ENCODE measurements at regions of chr2 and their contacts with region 1.

Region 1: GRCh38 chr2:177474998-177475397 is 82.4 kb downstream of the AGPS start:
- DNase-seq: no peak
- H3K4me3 ChIP-seq: no peak overlapping the region
- CTCF ChIP-seq: no peak
- POLR2A ChIP-seq: no peak

Region 2: GRCh38 chr2:175597286-175597685 is 1877.7 kb before region 1 on chr2:
- intact Hi-C with region 1: no loop called
- DNase-seq: no peak
- H3K4me3 ChIP-seq: no peak overlapping the region
- CTCF ChIP-seq: no peak
- POLR2A ChIP-seq: no peak

Region 3: DNA sequence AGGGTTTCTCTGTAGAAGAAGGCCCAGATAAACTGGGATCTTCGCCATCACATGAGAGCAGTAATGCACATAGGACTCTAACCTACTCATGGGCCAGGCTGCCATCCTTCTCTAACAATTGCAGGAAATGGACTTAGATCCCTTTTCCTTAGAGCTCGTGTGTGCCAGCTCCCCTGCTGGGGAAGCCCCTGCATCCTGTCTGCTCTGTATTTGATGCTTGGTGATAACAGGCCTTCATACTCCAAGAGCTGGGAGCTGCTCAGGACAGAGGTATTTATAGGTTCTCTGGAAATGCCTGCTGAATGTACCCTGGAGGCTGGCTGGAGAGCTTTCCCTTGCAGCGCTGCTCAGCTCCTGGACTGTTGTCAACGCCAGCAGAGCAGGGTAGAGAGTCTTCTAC is 956.2 kb before region 1 on chr2:
- intact Hi-C with region 1: no loop called
- DNase-seq: no peak
- H3K4me3 ChIP-seq: no peak overlapping the region
- CTCF ChIP-seq: no peak
- POLR2A ChIP-seq: no peak

Region 4: DNA sequence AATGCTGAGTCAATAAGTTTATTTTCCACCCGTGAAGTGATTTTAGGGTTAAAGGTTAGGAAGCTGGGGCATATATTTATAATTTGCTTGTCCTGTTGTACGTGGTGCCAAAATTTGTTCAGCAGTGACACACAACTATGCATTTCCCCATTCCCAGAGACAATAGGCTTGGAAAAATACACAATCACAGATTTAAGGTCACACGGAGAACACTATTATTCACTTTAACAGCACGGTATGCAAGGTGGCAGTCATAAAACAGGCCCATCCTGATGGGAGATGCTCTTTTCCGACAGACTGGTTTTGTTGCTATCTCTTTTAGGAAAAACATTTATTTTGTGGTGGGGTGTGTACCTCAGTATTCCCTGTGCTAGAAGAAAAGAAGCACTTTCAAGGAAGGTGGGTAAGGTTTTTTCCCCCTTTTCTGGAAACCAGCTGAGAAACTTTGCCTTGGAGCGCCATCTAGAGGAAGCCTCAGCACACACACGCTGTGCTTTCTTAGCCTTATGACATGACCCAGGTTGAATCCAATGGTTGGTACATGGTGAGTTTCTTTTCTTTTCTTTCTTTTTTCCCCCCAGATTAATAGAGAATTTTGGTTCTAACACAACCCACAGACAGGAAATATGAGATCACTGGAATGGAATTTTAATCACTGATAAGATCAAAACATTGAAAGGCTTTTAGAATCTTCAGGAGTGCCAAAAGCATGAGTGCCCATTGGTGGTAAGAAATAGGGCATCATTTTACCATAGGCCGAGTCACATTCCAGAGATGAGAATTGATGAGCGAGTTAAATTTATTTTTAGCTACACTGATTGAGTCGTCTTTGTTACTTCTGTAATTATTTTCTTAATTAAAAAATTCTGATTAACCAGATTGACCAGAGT is 249.6 kb after region 1 on chr2:
- intact Hi-C with region 1: no loop called
- DNase-seq: peak in 1 of 2 donors; percentile 86
- H3K4me3 ChIP-seq: no peak overlapping the region
- CTCF ChIP-seq: no peak
- POLR2A ChIP-seq: no peak

Region 5: GRCh38 chr2:177872286-177872685 is 397.3 kb after region 1 on chr2:
- intact Hi-C with region 1: loop called (anchors 5 kb)
- DNase-seq: no peak
- H3K4me3 ChIP-seq: no peak overlapping the region
- CTCF ChIP-seq: no peak
- POLR2A ChIP-seq: no peak